ENCODE measurements at regions of chr13 and their contacts with region 1.

Region 1: GRCh38 chr13:98565726-98566565 is 11.0 kb downstream of the STK24 start:
- DNase-seq: peak; percentile 66
- ATAC-seq: peak; percentile 59
- H3K4me3 ChIP-seq: no peak overlapping the region
- H3K27ac ChIP-seq: peak overlapping the region; percentile 82
- H3K4me1 ChIP-seq: peaks cover 83% of the 10 kb centered on the region
- H3K27me3 ChIP-seq: no peaks in the 10 kb centered on the region
- CTCF ChIP-seq: no peak

Region 2: DNA sequence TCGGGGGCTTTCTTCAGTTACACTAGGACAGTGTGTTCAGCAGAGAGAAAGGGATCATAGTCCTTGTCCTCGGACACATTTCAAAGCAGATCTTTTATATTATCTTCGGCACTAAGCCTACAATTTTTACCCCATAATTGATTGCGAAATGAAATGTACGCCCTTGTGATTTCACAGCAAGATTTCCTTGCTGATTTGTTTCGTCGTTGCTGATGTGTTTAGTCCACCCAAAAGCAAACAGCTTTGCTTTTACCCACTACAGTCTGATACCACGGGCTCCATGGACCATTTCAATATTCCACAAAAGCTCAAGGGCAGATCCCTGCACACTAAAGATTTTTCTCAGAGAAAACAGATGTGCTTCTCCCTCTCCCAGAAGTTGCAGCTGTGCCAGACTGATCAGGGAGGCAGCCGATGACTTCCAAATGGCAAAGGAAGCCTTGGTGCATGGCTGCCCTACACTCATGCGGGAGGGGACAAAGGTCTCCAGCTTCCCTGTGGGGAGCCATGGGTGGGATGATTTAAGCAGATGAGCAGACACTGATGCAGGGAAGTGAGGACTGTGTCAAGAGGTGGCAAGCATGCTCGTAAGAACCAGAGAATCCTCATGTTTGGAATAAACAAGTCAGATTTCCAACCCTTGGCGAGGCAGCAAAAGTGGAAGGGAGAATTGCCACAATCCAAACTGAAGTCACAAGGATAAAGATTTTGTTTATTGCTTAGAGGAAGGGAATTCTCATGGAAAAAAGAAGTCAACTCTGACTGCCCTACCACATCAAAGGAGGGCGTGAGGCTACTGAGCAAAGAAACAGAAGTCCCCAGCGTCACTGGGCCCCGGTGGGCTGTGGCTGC is 70.1 kb before region 1 on chr13:
- intact Hi-C with region 1: loop called (anchors 10 kb)
- DNase-seq: no peak
- ATAC-seq: peak; percentile 76
- H3K4me3 ChIP-seq: no peak overlapping the region
- H3K27ac ChIP-seq: peak overlapping the region; percentile 69
- H3K4me1 ChIP-seq: peaks cover 42% of the 10 kb centered on the region
- H3K27me3 ChIP-seq: no peaks in the 10 kb centered on the region
- CTCF ChIP-seq: no peak

Region 3: GRCh38 chr13:98509271-98510155 is 56.4 kb before region 1 on chr13:
- intact Hi-C with region 1: no loop called
- DNase-seq: peak; percentile 64
- ATAC-seq: peak; percentile 87
- H3K4me3 ChIP-seq: no peak overlapping the region
- H3K27ac ChIP-seq: peak overlapping the region; percentile 75
- H3K4me1 ChIP-seq: peaks cover 56% of the 10 kb centered on the region
- H3K27me3 ChIP-seq: no peaks in the 10 kb centered on the region
- CTCF ChIP-seq: no peak

Region 4: GRCh38 chr13:98761126-98761985 is 195.4 kb after region 1 on chr13:
- intact Hi-C with region 1: no loop called
- DNase-seq: no peak
- ATAC-seq: peak; percentile 75
- H3K4me3 ChIP-seq: peak overlapping the region; percentile 41
- H3K27ac ChIP-seq: no peak overlapping the region
- H3K4me1 ChIP-seq: no peaks in the 10 kb centered on the region
- H3K27me3 ChIP-seq: no peaks in the 10 kb centered on the region
- CTCF ChIP-seq: no peak